HEK293 (cell line): ENCODE measurements at regions of chr1 and their contacts with region 1.

Region 1: DNA sequence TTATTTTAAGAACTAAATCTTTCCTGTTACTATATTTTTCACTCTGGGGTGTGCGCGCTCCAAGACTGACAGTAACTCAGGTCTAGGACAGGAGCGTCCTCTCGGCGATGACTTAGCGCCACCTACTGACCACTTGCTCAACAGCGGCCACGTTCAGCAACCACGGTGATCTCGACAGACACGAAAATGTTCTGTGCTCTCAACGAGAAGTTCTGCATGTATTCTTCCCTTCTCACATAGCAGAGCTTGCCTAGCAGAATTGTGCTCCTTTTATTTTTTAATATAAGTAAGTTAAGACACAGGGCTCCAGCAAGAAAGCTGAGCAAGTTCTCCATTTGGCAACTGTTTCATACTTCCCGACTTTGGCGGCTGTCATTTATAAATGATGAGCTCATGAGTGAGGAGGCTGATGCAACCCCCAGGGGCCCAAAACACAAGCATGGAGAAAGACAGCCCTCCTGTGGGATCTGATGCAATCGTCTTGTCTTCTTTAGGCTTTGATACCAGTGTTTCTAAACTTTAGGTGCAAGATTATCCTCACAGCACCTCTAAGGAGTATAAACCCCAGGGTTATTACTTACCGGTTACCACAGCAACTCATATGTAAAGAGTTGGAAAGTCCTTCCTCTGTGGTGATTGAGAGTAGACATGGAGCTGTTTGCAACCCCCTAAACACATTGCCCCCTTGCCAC is 92.6 kb downstream of the HHIPL2 start:
- H3K4me3 ChIP-seq: peak overlapping the region; percentile 25
- H3K27ac ChIP-seq: no peak overlapping the region; the same call in 1 of the 2 replicates
- H3K4me1 ChIP-seq: no peaks in the 10 kb centered on the region
- CTCF ChIP-seq: peak; percentile 94

Region 2: GRCh38 chr1:221263831-221264767 is 1191.2 kb before region 1 on chr1:
- CTCF ChIA-PET with region 1: interaction called, 14 read pairs
- POLR2A ChIA-PET with region 1: no interaction called
- H3K4me3 ChIP-seq: no peak overlapping the region
- H3K27ac ChIP-seq: no peak overlapping the region
- H3K4me1 ChIP-seq: peaks cover 3% of the 10 kb centered on the region
- CTCF ChIP-seq: peak; percentile 46; the same call in 1 of the 2 replicates

Region 3: GRCh38 chr1:221543529-221544120 is 911.7 kb before region 1 on chr1:
- CTCF ChIA-PET with region 1: interaction called, 10 read pairs
- POLR2A ChIA-PET with region 1: no interaction called
- H3K4me3 ChIP-seq: no peak overlapping the region
- H3K27ac ChIP-seq: no peak overlapping the region
- H3K4me1 ChIP-seq: no peaks in the 10 kb centered on the region
- CTCF ChIP-seq: peak; percentile 20; the same call in 1 of the 2 replicates

Region 4: DNA sequence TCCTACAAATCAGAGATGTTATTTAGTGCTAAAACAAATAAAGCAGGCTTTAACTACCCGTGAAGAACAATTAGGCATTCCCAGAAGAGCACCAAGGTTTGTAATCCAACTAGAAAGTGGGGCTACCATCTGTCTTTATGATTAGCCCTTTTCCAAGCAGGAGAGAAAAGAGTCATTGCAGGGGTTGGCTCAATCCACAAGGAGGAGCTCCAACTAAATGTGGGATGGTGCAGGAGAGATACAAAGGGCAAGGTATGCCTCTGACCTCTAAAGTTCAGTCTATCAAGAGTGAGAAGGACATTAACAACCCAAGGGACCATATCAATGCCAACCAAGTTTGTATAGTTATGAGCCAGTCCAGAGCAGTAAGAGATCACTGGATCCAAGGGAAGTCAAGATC is 330.7 kb before region 1 on chr1:
- CTCF ChIA-PET with region 1: interaction called, 14 read pairs
- POLR2A ChIA-PET with region 1: no interaction called
- H3K4me3 ChIP-seq: no peak overlapping the region
- H3K27ac ChIP-seq: no peak overlapping the region
- H3K4me1 ChIP-seq: no peaks in the 10 kb centered on the region
- CTCF ChIP-seq: 0 out of 2 replicates have a peak, but pooled peaks have one; percentile 21

Region 5: DNA sequence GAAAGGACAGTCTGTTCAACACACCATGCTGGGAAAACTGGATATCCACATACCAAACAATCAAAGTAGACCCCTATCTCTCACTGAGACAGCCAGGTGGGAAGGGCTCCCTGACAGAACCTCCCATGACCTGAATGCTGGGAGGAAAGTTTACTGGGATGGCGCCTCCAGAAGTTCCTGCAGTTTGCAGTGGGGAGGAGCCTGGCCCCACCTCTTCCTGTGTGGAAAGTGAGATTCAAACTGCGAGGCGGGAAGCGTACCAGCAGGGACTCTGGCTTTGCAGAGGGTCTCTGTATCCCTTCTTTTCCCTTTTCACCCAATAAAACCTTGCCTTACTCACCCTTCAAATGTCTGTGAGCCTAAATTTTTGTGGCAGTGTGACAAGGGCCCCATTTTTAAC is 98.1 kb before region 1 on chr1:
- CTCF ChIA-PET with region 1: no interaction called
- POLR2A ChIA-PET with region 1: no interaction called
- H3K4me3 ChIP-seq: no peak overlapping the region
- H3K27ac ChIP-seq: no peak overlapping the region
- H3K4me1 ChIP-seq: no peaks in the 10 kb centered on the region
- CTCF ChIP-seq: no peak

Region 6: DNA sequence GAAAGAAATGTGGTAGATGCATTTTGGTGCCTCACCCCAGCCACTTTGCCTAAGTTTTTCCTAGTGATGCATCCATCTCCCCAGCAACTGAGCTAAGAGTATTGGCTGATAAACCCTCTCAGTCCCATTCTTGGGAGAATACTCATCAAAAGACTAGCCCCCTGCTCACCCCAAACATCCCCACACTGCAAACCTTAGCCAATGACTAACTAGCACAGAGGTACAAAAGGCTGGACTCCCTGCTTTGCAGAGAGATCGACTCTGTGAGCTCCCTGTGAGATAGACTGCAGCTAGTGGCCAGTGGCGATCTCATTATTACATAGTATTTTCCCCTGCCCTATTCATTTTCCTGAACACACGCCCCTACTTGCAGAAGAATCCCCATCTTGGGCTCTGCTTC is 62.8 kb before region 1 on chr1:
- CTCF ChIA-PET with region 1: no interaction called
- POLR2A ChIA-PET with region 1: no interaction called
- H3K4me3 ChIP-seq: no peak overlapping the region
- H3K27ac ChIP-seq: no peak overlapping the region
- H3K4me1 ChIP-seq: no peaks in the 10 kb centered on the region
- CTCF ChIP-seq: no peak

Region 7: DNA sequence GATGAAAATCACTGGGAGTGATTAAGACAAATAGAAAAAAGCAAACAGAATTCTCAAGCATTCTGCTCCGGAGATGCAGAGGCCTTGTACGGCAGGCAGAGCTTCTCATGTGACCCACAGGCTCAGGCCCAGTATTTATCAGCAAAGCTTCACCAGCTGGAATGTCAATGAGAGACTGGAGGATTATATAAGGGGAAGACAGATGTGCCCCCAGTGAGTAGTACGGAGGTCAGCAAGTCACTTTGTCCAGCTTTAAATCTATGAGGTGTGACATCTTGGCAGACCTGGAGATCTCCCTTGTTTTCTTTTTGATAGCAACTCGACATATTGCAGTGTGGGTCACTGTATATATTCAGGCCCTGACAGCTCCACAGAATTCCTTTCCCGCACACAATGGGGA is 14.3 kb before region 1 on chr1:
- CTCF ChIA-PET with region 1: interaction called, 24 read pairs
- POLR2A ChIA-PET with region 1: no interaction called
- H3K4me3 ChIP-seq: no peak overlapping the region
- H3K27ac ChIP-seq: no peak overlapping the region
- H3K4me1 ChIP-seq: no peaks in the 10 kb centered on the region
- CTCF ChIP-seq: no peak